ENCODE measurements at regions of chr15 and their contacts with region 1.

Region 1: DNA sequence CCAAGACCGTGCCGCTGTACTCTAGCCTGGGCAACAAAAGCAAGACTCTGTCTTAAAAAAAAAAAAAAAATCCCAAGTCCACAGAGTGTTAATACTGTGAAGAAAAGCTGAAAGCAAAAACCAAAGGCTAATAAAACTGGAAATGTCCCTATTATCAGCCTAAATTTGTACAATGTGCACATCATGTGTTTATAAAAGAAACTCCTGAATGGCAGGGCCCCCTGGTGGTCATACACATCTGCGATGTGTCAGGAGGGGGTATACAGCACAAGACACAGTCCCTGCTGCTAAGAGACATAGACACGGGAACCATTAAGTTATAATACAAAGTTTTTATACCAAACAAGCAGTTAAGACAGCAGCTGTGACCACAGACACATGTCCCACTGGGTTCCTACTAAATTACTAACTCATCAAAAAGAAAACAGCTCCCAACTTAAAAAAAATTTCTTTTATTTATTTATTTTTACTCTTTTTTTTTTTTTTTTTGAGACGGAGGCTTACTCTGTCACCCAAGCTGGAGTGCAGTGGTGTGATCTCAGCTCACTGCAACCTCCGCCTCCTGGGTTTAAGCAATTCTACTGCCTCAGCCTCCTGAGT is 31.0 kb downstream of the IDH2 start:
- DNase-seq: peak; percentile 65
- H3K4me3 Mint-ChIP-seq: no peak overlapping the region
- H3K27ac Mint-ChIP-seq: peak overlapping the region; percentile 12
- H3K4me1 Mint-ChIP-seq: peaks cover 7% of the 10 kb centered on the region
- H3K27me3 Mint-ChIP-seq: no peaks in the 10 kb centered on the region

Region 2: DNA sequence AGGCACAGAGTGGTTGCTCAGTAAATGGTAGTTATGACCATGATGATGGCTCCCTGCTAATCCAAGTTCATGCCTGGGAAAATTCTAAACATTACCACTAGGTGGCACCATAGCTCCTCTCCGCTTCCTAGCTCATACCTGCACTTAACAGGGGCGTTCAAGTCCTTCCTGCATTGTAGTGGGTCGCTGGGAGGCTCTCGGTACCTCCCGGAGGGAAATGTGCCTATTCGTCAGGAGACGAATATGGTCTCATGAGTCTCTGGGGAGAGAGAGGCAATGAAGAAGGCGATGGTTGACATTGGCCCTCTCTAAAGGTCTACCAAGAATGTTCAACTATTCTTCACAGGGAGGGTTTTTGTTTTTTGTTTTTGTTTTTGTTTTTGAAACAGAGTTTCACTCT is 331.2 kb before region 1 on chr15:
- intact Hi-C with region 1: loop called (anchors 5 kb)
- DNase-seq: peak; percentile 56
- H3K4me3 Mint-ChIP-seq: no peak overlapping the region
- H3K27ac Mint-ChIP-seq: no peak overlapping the region
- H3K4me1 Mint-ChIP-seq: peaks cover 2% of the 10 kb centered on the region
- H3K27me3 Mint-ChIP-seq: peaks cover 6% of the 10 kb centered on the region

Region 3: GRCh38 chr15:90001683-90002427 is 69.5 kb before region 1 on chr15:
- intact Hi-C with region 1: loop called (anchors 5 kb)
- DNase-seq: peak; percentile 60
- H3K4me3 Mint-ChIP-seq: peak overlapping the region; percentile 85
- H3K27ac Mint-ChIP-seq: peak overlapping the region; percentile 87
- H3K4me1 Mint-ChIP-seq: peaks cover 50% of the 10 kb centered on the region
- H3K27me3 Mint-ChIP-seq: no peaks in the 10 kb centered on the region